ENCODE measurements at regions of chr6 and their contacts with region 1.

Region 1: GRCh38 chr6:41705996-41706835 is 29.2 kb downstream of the TFEB start:
- DNase-seq: peak; percentile 88
- H3K4me3 Mint-ChIP-seq: peak overlapping the region; percentile 26
- H3K27ac Mint-ChIP-seq: peak overlapping the region; percentile 87
- H3K4me1 Mint-ChIP-seq: peaks cover 29% of the 10 kb centered on the region
- H3K27me3 Mint-ChIP-seq: no peaks in the 10 kb centered on the region

Region 2: GRCh38 chr6:41735427-41736356 is 29.5 kb after region 1 on chr6 and contains the start of gene TFEB:
- CTCF ChIA-PET with region 1: interaction called, 6 read pairs
- intact Hi-C with region 1: loop called (anchors 1 kb)
- DNase-seq: peak; percentile 96
- H3K4me3 Mint-ChIP-seq: peak within 1 kb of the TSS; percentile 72
- H3K27ac Mint-ChIP-seq: no peak within 1 kb of the TSS
- H3K4me1 Mint-ChIP-seq: peaks cover 21% of the 10 kb centered on the region
- H3K27me3 Mint-ChIP-seq: no peaks in the 10 kb centered on the region
- total RNA-seq, gene TFEB: 5.7 to 7.9 TPM